Breast epithelium (tissue), 4 donors: ENCODE measurements at regions of chr1 and their contacts with region 1.

Region 1: GRCh38 chr1:156456622-156457465 is 43.7 kb downstream of the MEF2D start:
- DNase-seq: peak; percentile 99
- H3K4me3 ChIP-seq: peak overlapping the region; percentile 53 to 78 (median 58)
- H3K27ac ChIP-seq: peak overlapping the region; percentile 99 to 100
- H3K4me1 ChIP-seq: peaks cover 0 to 2% of the 10 kb centered on the region in 2 donors
- H3K27me3 ChIP-seq: no peaks in the 10 kb centered on the region
- CTCF ChIP-seq: no peak
- POLR2A ChIP-seq: peak; percentile 91

Region 2: GRCh38 chr1:156601122-156601830 is 144.4 kb after region 1 on chr1 and contains the start of gene GPATCH4:
- intact Hi-C with region 1: loop called (anchors 10 kb)
- DNase-seq: peak; percentile 59 to 64
- H3K4me3 ChIP-seq: peak within 1 kb of the TSS; percentile 56 to 84 (median 69)
- H3K27ac ChIP-seq: peak within 1 kb of the TSS; percentile 70 to 76
- H3K4me1 ChIP-seq: peaks cover 0 to 6% of the 10 kb centered on the region in 2 donors
- H3K27me3 ChIP-seq: no peaks in the 10 kb centered on the region
- CTCF ChIP-seq: no peak
- POLR2A ChIP-seq: peak; percentile 25
- total RNA-seq, gene GPATCH4: 20.2 to 31.1 (median 23.7) TPM